Endothelial cell of umbilical vein (primary cell): ENCODE measurements at regions of chr6 and their contacts with region 1.

Region 1: GRCh38 chr6:158168040-158168289 is at the start of gene SERAC1:
- DNase-seq: no peak
- H3K4me3 ChIP-seq: peak within 1 kb of the TSS; percentile 63 to 88 (median 85)
- H3K27ac ChIP-seq: peak within 1 kb of the TSS; percentile 84
- H3K4me1 ChIP-seq: peaks cover 4% of the 10 kb centered on the region
- H3K27me3 ChIP-seq: no peaks in the 10 kb centered on the region
- CTCF ChIP-seq: no peak
- POLR2A ChIP-seq: no peak
- total RNA-seq, gene SERAC1: 5.7 and 6.9 TPM in 2 replicates

Region 2: DNA sequence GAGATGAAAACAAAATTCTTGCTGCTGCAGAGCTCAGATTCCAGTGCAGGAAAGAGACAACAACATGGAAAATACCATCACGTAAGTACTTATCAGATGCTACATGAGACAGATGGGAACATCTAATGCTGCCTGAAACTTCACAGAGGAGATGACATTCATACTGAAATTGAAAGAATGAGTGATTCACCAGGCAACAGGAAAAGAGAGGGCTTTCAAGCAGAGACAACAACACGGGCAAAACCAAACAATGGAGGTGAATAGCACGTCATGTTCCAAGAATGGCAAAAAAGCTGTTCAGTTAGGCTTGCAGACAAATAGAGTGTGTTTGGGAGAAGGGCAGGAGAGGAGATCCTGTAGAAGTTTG is 39.4 kb after region 1 on chr6:
- CTCF ChIA-PET with region 1: interaction called, 3 read pairs
- POLR2A ChIA-PET with region 1: no interaction called
- dilution Hi-C with region 1: no loop called
- intact Hi-C with region 1: loop called (anchors 1 kb)
- DNase-seq: peak; percentile 87
- H3K4me3 ChIP-seq: peak overlapping the region in 1 of 3 experiments; percentile 2
- H3K27ac ChIP-seq: peak overlapping the region; percentile 96
- H3K4me1 ChIP-seq: peaks cover 26% of the 10 kb centered on the region
- H3K27me3 ChIP-seq: no peaks in the 10 kb centered on the region
- CTCF ChIP-seq: no peak
- POLR2A ChIP-seq: no peak

Region 3: DNA sequence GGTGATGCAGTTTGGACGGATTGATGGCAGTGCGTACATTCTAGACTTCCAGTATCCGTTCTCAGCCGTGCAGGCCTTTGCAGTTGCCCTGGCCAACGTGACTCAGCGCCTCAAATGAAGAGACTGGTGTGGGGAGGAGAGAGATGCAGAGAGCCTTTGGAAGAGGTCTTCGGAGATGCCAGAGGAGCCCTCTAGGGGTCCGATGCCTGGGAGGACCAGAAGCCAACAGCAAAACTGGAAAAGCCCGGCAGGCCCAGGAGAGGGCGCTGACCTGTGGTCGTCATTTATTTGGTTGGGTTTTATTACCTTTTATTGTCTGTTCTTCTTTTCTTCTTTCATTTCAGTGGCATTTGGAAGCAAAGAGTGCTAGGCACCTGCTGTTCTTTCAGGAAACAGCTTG is 338.6 kb after region 1 on chr6:
- CTCF ChIA-PET with region 1: no interaction called
- POLR2A ChIA-PET with region 1: no interaction called
- dilution Hi-C with region 1: no loop called
- intact Hi-C with region 1: no loop called
- DNase-seq: peak; percentile 8
- H3K4me3 ChIP-seq: no peak overlapping the region
- H3K27ac ChIP-seq: no peak overlapping the region
- H3K4me1 ChIP-seq: no peaks in the 10 kb centered on the region
- H3K27me3 ChIP-seq: no peaks in the 10 kb centered on the region
- CTCF ChIP-seq: peak; percentile 50 to 53
- POLR2A ChIP-seq: no peak